GM10248 (cell line): ENCODE measurements at regions of chr1 and their contacts with region 1.

Region 1: DNA sequence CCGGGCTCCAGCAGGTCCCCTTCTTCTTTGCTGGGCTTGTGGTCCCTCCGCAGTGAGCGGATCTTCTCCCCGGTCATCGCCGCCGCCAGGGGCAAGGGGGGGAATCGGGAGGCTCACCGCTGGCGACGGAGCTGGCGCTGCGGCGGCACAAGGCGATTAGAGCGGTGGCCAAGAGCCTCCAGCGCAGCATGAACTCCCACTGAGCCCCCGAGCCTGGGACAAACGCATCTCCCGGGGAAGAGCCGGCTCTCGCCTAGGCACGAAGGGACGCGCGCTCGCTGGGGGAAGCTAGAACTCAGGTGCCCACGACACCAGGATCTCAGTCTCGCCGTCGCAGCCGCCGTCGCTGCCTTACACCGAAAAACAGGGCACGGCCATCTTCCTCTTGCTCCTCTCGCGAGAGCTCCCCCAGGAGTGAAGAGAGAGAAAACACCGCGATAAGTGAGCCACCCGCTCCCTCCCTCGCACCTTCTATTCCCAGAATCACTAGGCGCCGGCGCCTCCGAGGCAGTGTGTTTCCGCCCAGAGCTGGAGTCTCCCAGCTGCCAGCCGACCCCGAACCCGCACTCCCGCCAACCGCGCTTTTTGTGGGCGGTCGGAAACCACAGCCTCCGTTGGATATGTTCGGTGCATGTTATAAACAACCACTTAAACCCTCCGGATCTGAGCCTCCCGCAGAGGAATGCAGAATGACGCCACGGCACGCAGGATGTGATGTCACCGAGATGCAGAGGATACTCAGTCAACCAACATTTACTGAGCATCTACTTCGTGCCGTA is at the start of gene ANKRD13C:
- DNase-seq: peak; percentile 94
- CTCF ChIP-seq: peak; percentile 8

Region 2: GRCh38 chr1:70410604-70411359 is 56.3 kb after region 1 on chr1 and contains the start of gene CTH:
- CTCF ChIA-PET with region 1: interaction called, 10 read pairs
- POLR2A ChIA-PET with region 1: interaction called, 9 read pairs
- DNase-seq: peak; percentile 93
- CTCF ChIP-seq: no peak